HEK293T (cell line): ENCODE measurements at regions of chr11 and their contacts with region 1.

Region 1: DNA sequence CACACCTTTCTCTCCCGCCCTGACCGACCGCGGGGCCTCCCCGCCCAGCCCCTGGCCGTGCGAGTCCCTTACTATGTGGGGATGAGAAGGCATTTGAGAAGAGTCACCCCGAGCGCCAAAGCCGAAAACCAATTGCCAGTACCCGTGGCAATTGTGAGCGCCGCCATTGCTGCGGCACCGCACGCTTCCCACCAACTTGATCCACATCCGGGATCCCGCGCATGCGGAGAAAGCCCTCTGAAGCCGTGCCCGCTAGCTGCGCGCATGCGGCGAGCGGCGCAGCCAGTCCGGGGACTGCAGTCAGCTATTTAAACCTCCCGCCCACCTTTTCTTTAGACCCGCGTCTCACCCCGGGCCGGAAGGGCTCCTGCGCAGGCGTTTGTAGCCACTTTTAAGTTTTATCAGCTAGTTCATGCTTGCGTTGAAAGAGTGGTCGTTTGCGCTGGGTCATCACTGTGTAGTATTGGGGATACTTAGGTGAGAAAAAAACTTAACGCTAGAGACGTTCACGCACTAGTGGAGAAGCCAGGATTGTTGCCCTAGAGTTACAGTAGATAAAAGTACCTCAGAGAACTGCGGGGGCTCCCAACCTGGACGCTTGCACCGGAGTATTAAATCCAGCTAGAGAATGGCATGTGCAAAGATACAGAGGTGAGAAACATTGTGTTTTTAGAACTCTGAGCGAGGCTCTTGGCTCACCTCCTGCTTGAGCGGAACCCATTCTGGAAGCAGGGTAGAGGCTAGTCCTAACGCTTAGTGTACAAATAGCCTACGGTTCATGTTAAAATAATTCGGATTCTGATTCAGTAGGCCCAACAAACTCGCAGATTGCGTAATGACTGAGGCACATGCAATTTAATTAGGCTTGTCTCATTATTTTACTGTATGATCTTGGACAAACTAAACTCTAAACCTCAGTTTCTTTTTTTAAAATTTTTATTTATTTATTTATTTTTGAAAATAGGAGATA is at the start of gene ALG8:
- DNase-seq: peak; percentile 99

Region 2: GRCh38 chr11:78188286-78189173 is 48.8 kb after region 1 on chr11 and contains the starts of genes KCTD21 and USP35:
- CTCF ChIA-PET with region 1: no interaction called
- POLR2A ChIA-PET with region 1: interaction called, 23 read pairs
- DNase-seq: peak; percentile 98